Left ventricle myocardium inferior (tissue), 1 donor: ENCODE measurements at regions of chr1 and their contacts with region 1.

Region 1: DNA sequence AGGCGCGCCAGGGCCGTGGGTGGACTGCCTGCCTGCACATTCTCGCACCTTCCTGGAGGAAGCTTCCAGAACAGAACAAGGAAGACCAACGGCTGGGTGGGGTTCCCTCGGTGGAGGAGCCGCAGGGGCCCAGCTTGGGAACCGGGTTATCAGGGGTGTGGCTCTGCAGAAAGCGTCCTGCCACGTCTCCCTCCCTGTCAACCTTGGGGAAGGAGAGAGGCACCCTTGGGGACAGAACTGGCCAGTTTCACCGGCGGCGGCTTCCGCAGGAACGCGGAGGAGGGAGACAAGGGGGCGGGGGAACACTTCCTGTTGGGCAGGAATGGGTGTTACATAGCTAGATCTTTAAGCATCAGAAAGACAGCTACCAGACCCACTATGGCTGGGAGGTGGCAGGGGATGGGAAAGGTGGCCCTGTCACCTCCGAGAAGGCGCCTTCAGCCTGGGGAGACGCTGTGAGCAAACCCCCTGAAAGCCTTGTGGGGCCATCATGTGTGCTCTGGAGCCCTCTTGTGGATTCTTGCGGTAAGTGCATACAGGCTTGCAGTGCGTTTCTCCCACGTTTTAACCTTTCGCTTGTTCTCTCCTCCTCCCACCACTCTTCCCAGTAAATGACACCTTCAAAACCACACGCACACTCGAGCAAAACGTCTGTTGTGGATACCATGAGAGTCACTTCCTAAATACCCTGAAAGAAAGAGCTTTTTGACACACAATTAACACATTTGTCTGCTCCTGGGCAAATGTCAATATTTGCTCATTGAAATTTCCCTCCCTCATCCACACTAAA is 3.8 kb upstream of the PLEKHA6 start:
- DNase-seq: peak; percentile 73
- H3K4me3 ChIP-seq: peak overlapping the region; percentile 65
- H3K27ac ChIP-seq: peak overlapping the region; percentile 88
- H3K4me1 ChIP-seq: peaks cover 52% of the 10 kb centered on the region
- H3K27me3 ChIP-seq: peaks cover 3% of the 10 kb centered on the region
- CTCF ChIP-seq: peak; percentile 98

Region 2: DNA sequence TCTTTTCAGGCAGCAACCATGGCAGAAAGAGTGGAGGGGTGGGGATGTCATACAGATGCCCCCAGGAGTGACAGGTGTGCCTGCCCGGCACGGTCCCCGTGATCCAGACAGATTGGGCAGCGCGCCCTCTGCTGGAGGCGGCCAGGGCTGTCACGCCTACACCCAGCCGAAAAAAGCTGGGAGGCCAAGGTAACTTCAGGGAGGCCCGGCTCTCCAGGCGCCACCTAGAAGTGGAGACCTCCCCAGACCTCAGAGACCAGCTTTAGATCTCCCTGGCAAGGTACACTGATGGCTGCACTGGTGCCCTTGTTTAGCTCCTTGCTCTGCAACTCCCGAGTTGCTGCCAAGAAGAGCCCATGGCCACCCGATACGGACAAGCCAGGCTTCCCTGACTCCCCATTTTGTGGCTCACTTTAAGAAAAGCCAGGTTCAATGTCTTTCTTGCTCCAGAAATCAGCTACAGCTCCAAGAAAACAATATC is 156.4 kb before region 1 on chr1:
- intact Hi-C with region 1: loop called (anchors 5 kb)
- DNase-seq: peak; percentile 55
- H3K4me3 ChIP-seq: no peak overlapping the region
- H3K27ac ChIP-seq: no peak overlapping the region
- H3K4me1 ChIP-seq: peaks cover 4% of the 10 kb centered on the region
- H3K27me3 ChIP-seq: peaks cover 45% of the 10 kb centered on the region
- CTCF ChIP-seq: peak; percentile 95